Transverse colon (tissue), 4 donors: ENCODE measurements at regions of chr17 and their contacts with region 1.

Region 1: DNA sequence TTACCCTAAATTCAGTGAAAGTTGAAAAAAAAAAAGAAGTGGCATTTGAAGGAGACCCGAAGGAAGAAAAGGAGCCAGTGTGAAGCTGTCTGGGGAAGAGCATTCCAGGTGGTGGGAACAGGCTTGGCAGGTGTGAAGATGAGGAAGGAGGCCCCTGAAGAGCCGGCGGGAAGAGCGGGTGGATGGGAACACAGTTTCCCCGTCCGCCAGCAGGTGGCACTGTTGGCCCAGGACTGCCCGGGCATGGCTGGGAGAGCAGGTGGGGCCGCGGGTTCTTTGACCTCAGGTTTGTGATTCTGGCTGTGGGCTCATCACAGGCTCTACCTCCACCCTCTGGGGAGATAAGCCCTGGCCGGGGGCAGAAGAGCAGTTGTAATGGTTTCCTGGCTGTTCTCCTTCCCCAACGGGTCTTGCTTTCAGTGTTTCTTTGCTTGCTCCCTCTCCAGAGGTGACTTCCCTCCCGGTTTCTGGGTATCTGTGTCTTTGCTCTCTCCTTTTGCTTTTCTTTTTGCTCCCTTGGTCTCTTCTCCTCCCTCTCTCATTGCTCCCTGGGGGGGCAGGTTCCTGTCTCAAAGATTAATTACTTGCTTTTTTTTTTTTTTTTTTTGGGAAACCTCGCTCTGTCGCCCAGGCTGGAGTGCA is 32.3 kb downstream of the RAP1GAP2 start:
- DNase-seq: peak; percentile 84
- H3K4me3 ChIP-seq: no peak overlapping the region
- H3K27ac ChIP-seq: no peak overlapping the region
- H3K4me1 ChIP-seq: peaks cover 0 to 3% (median 0%) of the 10 kb centered on the region in 4 donors
- H3K27me3 ChIP-seq: no peaks in the 10 kb centered on the region
- CTCF ChIP-seq: peak; percentile 90 to 97 (median 93)
- EP300 ChIP-seq: no peak
- POLR2A ChIP-seq: no peak

Region 2: GRCh38 chr17:3012926-3013581 is 184.5 kb after region 1 on chr17:
- in situ Hi-C with region 1: loop called (anchors 10 to 25 kb)
- intact Hi-C with region 1: loop called (anchors 1 kb)
- DNase-seq: peak; percentile 70
- H3K4me3 ChIP-seq: no peak overlapping the region
- H3K27ac ChIP-seq: no peak overlapping the region
- H3K4me1 ChIP-seq: no peaks in the 10 kb centered on the region
- H3K27me3 ChIP-seq: no peaks in the 10 kb centered on the region
- CTCF ChIP-seq: peak; percentile 71 to 83 (median 73)
- EP300 ChIP-seq: no peak
- POLR2A ChIP-seq: no peak